ENCODE measurements at regions of chrX and their contacts with region 1.

Region 1: DNA sequence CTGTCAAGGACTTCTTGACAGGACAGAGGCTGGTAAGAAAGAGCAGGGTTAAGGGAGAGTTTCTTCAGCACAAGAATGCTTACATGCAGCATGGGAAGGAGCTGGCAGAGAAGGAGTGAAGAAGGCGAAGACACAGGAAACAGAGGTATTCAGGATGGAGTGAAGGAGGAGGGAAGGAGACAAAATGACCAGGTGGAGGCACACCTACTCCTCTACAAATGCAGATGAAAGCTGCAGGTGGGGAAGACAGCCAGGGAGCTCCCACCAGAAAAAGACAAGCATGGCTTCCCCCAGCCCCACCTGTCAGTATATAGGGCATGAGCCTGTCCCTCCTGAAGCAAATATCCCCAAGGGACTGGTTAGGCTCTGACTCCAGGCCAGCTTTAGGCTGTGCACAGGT is 29.6 kb upstream of the NKRF start:
- DNase-seq: no peak
- H3K4me3 ChIP-seq: no peak overlapping the region
- H3K27me3 ChIP-seq: no peaks in the 10 kb centered on the region
- CTCF ChIP-seq: no peak

Region 2: DNA sequence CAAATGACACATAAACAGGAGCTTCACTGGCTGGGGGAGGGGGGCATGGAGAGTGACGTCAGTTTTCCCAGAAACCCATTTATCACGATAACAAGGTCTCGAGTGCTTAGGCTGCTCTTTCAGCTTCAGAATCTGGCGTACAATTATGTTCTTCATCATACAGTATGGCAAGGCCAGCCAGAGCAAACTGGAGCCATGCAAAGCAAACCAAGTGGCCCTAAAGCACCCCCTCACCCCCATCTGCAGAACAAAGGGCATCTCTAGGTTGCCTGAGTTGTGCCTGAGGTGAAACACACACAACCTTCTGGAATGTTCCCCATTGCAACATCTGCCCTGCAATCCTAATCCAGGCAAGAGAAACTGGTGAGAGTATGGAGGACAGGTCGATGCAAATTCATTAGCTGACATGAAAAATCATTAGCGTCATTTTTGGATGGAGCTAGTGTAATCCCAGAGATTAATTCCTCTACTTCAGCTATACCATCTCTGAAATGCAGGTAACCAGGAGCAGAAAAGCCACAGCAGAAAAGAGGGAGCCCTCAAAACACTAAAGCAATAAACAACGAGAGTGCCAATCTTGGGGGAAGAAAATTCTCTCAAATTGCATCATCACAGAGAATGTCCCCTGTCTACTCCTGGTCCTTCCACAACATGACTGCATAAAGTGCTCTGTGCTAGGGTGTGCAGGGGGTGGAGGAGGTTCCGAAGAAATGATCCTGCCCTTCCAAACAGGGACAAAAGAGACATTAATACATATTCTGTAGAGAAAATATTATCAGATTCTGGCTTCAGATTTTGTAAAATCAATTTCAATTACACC is 55.3 kb after region 1 on chrX:
- CTCF ChIA-PET with region 1: no interaction called
- POLR2A ChIA-PET with region 1: interaction called, 10 read pairs
- DNase-seq: no peak
- H3K4me3 ChIP-seq: 0 out of 2 replicates have a peak overlapping the region, but pooled peaks have one; percentile 11
- H3K27me3 ChIP-seq: no peaks in the 10 kb centered on the region
- CTCF ChIP-seq: no peak

Measured in BJ (cell line).